Activated CD8-positive, alpha-beta T cell treated with anti-CD3 and anti-CD28 coated beads for 36 hours (primary cell): ENCODE measurements at regions of chr2 and their contacts with region 1.

Region 1: GRCh38 chr2:200713003-200713703 is 98.6 kb upstream of the BZW1 start:
- DNase-seq: peak; percentile 98
- ATAC-seq: peak; percentile 95
- H3K4me3 Mint-ChIP-seq: peak overlapping the region; percentile 73
- H3K27ac Mint-ChIP-seq: peak overlapping the region; percentile 100
- H3K4me1 Mint-ChIP-seq: peaks cover 43% of the 10 kb centered on the region
- H3K27me3 Mint-ChIP-seq: peaks cover 4% of the 10 kb centered on the region
- CTCF ChIP-seq: peak; percentile 71

Region 2: DNA sequence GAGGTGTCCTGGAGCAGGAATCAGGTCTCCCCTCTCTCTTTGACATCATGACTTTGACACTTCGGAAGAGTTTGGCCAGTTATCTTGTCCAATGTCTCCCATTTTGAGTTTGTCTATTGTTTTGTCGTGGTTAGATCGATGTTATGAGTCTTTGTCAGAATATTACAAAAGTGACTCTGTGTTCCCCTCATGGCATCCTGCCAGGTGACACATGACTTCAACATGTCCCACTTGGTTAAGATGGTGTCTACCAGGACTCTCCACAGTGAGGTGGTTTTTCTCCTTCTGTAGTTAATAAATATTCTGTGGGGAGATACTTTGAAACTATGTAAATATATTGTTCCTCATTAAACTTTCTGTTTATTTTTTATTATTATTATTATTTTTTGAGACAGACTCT is 21.9 kb after region 1 on chr2:
- CTCF ChIA-PET with region 1: interaction called, 19 read pairs
- POLR2A ChIA-PET with region 1: interaction called, 7 read pairs
- intact Hi-C with region 1: no loop called
- DNase-seq: peak; percentile 62
- ATAC-seq: no peak
- H3K4me3 Mint-ChIP-seq: no peak overlapping the region
- H3K27ac Mint-ChIP-seq: peak overlapping the region; percentile 70
- H3K4me1 Mint-ChIP-seq: peaks cover 19% of the 10 kb centered on the region
- H3K27me3 Mint-ChIP-seq: peaks cover 1% of the 10 kb centered on the region
- CTCF ChIP-seq: no peak

Region 3: GRCh38 chr2:200888704-200889625 is 175.8 kb after region 1 on chr2 and contains the starts of genes NIF3L1 and PPIL3:
- CTCF ChIA-PET with region 1: interaction called, 12 read pairs
- POLR2A ChIA-PET with region 1: interaction called, 6 read pairs
- intact Hi-C with region 1: loop called (anchors 1 kb)
- DNase-seq: peak; percentile 99
- ATAC-seq: peak; percentile 83
- H3K4me3 Mint-ChIP-seq: peak within 1 kb of the TSS; percentile 87
- H3K27ac Mint-ChIP-seq: peak within 1 kb of the TSS; percentile 99
- H3K4me1 Mint-ChIP-seq: peaks cover 46% of the 10 kb centered on the region
- H3K27me3 Mint-ChIP-seq: no peaks in the 10 kb centered on the region
- CTCF ChIP-seq: no peak
- total RNA-seq, gene NIF3L1: 30.8 to 35.3 TPM
- total RNA-seq, gene PPIL3: 97.9 to 99.4 TPM